A549 (cell line): ENCODE measurements at regions of chr9 and their contacts with region 1.

Region 1: DNA sequence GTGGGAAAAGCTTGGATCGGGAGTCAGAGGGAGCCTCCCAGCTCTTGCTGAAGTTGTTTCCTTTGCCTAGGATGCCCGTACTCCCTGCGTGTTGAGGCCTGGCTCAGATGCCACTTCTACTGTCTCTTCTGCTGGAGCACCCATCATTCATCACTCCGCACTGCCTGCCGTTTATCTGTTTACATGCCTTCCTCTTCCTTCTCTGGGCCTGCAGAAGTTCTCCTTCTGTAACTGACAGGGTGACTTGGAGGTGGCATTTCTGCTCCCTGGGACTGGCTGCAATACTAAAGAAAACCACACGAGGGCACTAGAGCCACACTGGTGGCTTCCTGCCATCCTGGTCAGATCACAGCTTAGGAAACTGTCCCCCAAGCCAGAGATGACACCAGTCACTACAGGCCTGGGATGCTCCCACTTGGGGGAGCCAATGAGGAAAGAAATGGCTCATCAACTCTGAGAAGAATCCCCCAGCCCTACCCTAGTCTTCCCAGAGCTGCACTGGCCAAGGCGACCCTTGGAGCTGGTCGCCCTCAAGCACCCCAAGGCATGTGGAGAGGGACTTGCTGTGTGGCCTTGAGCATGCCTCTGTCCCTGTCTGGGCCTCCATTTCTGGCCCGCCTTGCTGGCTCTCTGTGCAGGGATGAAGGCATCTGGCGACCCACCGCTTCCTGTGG is 9.7 kb upstream of the SLC25A51 start:
- DNase-seq: peak; percentile 78 to 86
- ATAC-seq: peak; percentile 73 to 85
- H3K4me3 ChIP-seq: no peak overlapping the region
- H3K27ac ChIP-seq: peak overlapping the region; percentile 7 to 73; a peak in 4 of 6 replicates
- H3K4me1 ChIP-seq: peaks cover 31% of the 10 kb centered on the region
- CTCF ChIP-seq: peak; percentile 96
- EP300 ChIP-seq: no peak
- POLR2A ChIP-seq: no peak
- RAD21 ChIP-seq: peak; percentile 99

Region 2: DNA sequence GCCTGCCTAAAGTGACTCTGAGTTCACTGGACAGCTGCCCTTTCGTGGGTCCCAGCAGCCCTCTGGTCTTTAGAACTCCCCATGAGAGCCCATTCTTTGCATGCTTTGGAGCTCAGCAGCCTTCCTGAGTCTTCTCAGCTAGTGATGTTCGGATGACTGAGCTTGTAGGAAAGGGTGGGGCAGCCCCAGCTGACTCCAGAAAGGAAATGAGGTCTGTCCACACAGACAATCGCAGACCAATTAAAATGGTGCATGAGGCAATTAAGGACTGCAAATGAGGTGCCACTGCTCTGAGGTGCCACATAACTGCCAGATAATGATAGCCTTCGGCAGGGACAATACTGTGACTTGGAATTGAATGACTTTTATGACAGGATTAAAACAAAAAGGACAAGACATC is 295.8 kb before region 1 on chr9:
- CTCF ChIA-PET with region 1: no interaction called
- POLR2A ChIA-PET with region 1: no interaction called
- DNase-seq: no peak
- ATAC-seq: no peak
- H3K4me3 ChIP-seq: no peak overlapping the region
- H3K27ac ChIP-seq: no peak overlapping the region
- H3K4me1 ChIP-seq: no peaks in the 10 kb centered on the region
- CTCF ChIP-seq: no peak
- EP300 ChIP-seq: no peak
- POLR2A ChIP-seq: no peak
- RAD21 ChIP-seq: no peak

Region 3: GRCh38 chr9:37944671-37945481 is 31.3 kb after region 1 on chr9:
- CTCF ChIA-PET with region 1: interaction called, 20 read pairs
- POLR2A ChIA-PET with region 1: no interaction called
- DNase-seq: no peak
- ATAC-seq: peak in 1 of 2 experiments; percentile 4; a peak in 2 of 6 replicates
- H3K4me3 ChIP-seq: no peak overlapping the region
- H3K27ac ChIP-seq: peak overlapping the region; percentile 63 to 76; a peak in 4 of 6 replicates
- H3K4me1 ChIP-seq: peaks cover 56% of the 10 kb centered on the region
- CTCF ChIP-seq: no peak
- EP300 ChIP-seq: no peak
- POLR2A ChIP-seq: no peak
- RAD21 ChIP-seq: no peak

Region 4: GRCh38 chr9:38047301-38048251 is 134.0 kb after region 1 on chr9:
- CTCF ChIA-PET with region 1: interaction called, 10 read pairs
- POLR2A ChIA-PET with region 1: no interaction called
- DNase-seq: peak; percentile 94
- ATAC-seq: peak; percentile 89 to 91
- H3K4me3 ChIP-seq: peak overlapping the region; percentile 25; the same call in 2 of the 3 replicates
- H3K27ac ChIP-seq: peak overlapping the region; percentile 94 to 97
- H3K4me1 ChIP-seq: peaks cover 64% of the 10 kb centered on the region
- CTCF ChIP-seq: no peak
- EP300 ChIP-seq: peak in 1 of 2 experiments; percentile 84; a peak in 3 of 5 replicates
- POLR2A ChIP-seq: no peak
- RAD21 ChIP-seq: peak in 1 of 2 experiments; percentile 26; a peak in 2 of 5 replicates

Region 5: GRCh38 chr9:38160613-38161215 is 247.1 kb after region 1 on chr9:
- CTCF ChIA-PET with region 1: interaction called, 10 read pairs
- POLR2A ChIA-PET with region 1: no interaction called
- DNase-seq: peak; percentile 56 to 64
- ATAC-seq: peak; percentile 52 to 85; a peak in 3 of 6 replicates
- H3K4me3 ChIP-seq: no peak overlapping the region
- H3K27ac ChIP-seq: no peak overlapping the region
- H3K4me1 ChIP-seq: no peaks in the 10 kb centered on the region
- CTCF ChIP-seq: peak; percentile 73
- EP300 ChIP-seq: no peak
- POLR2A ChIP-seq: no peak
- RAD21 ChIP-seq: peak; percentile 57 to 63

Region 6: GRCh38 chr9:38352530-38353328 is 439.1 kb after region 1 on chr9:
- CTCF ChIA-PET with region 1: interaction called, 19 read pairs
- POLR2A ChIA-PET with region 1: no interaction called
- DNase-seq: no peak
- ATAC-seq: no peak
- H3K4me3 ChIP-seq: no peak overlapping the region
- H3K27ac ChIP-seq: no peak overlapping the region
- H3K4me1 ChIP-seq: no peaks in the 10 kb centered on the region
- CTCF ChIP-seq: no peak
- EP300 ChIP-seq: no peak
- POLR2A ChIP-seq: no peak
- RAD21 ChIP-seq: no peak

Region 7: DNA sequence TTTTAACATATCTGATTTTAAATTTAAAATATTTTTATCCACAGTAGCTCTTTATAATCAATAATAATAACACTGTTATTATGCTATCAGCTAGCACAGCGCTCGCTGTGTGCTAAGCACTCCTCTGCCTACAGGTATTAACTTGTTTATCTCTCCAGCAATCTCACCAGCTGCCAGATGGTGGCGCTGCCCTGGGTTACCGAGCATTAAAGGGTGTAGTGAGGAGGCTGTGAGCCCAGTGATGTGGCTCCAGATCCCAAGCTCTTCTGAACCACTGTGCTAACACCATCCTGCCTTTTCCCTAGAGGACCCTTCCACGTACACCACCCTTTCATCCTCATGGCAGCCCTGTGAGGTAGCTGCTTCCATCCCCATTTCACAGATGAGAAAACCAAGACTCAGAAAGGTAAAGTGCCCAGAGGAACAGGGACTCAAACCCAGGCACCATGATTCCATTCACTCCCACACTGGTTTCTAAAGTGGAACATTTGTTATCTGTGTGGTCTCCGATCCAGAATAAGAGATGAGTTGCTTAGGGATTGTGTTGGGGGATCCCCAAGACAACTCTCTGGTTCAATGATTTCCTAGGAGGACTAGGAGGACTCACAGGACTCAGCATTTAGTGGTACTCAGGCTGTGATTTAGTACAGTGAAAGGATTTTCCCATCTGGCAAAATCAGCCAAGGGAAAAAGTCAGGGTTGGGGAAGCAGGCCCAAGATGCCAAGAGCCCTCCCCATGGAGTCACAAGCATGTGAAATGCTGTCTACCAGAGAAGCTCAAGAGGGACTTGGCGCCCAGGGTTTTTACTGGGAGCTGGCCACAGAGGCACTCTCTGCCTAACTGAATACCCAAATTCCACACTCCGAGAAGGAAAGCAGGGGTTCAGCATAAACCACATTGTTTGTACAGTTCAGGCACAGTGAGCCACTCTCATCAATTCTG is 503.7 kb after region 1 on chr9:
- CTCF ChIA-PET with region 1: interaction called, 12 read pairs
- POLR2A ChIA-PET with region 1: no interaction called
- DNase-seq: peak; percentile 38 to 48
- ATAC-seq: peak; percentile 50 to 87; a peak in 4 of 6 replicates
- H3K4me3 ChIP-seq: no peak overlapping the region
- H3K27ac ChIP-seq: no peak overlapping the region
- H3K4me1 ChIP-seq: no peaks in the 10 kb centered on the region
- CTCF ChIP-seq: peak; percentile 59
- EP300 ChIP-seq: no peak
- POLR2A ChIP-seq: no peak
- RAD21 ChIP-seq: peak; percentile 15 to 42; a peak in 2 of 5 replicates